AG04450 (cell line): ENCODE measurements at regions of chr15 and their contacts with region 1.

Region 1: DNA sequence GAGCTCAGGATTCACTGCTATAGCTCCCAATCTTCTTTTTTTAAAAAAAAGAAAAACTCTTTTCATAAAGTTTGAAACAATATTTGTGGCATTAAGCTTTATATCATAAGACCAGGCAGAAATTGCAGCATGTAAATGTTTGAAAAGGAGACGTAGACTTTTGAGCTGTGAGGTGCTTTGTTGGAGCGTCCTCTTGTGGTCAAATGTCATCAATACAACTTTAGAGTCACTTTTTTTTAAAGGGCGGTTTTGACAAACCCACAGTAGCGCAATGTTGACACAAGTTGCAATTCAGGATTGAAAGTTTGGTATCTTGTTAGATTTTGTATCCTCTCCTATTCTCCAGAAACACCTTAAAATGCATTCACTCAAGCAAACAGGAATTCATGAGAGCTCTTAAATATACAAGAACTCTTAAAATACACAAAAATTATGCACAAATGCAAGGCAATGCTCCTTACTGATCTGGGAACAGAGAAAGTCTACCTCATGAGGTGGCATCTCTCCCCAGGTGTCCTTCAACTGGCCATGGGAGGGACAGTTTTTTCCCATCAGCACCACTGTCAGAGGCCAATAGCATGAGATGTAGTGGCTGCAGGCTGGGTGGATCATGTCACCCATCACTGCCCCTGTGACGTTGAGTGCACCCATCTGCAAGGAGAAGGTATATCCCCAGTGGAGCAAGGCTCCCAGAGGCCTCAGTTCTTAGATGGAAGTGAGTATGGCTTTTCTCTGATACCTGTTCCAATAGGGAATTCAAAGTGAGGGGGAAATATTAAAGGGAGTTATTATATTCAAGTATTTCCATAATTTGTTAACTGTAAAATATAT is 70.7 kb downstream of the ANXA2 start:
- DNase-seq: peak; percentile 20
- H3K4me3 ChIP-seq: no peak overlapping the region
- H3K27ac ChIP-seq: no peak overlapping the region
- H3K27me3 ChIP-seq: peaks cover 32% of the 10 kb centered on the region
- CTCF ChIP-seq: peak; percentile 88

Region 2: GRCh38 chr15:59699810-59700431 is 627.1 kb before region 1 on chr15:
- CTCF ChIA-PET with region 1: interaction called, 14 read pairs
- POLR2A ChIA-PET with region 1: no interaction called
- DNase-seq: no peak
- H3K4me3 ChIP-seq: no peak overlapping the region
- H3K27ac ChIP-seq: no peak overlapping the region
- H3K27me3 ChIP-seq: no peaks in the 10 kb centered on the region
- CTCF ChIP-seq: no peak

Region 3: DNA sequence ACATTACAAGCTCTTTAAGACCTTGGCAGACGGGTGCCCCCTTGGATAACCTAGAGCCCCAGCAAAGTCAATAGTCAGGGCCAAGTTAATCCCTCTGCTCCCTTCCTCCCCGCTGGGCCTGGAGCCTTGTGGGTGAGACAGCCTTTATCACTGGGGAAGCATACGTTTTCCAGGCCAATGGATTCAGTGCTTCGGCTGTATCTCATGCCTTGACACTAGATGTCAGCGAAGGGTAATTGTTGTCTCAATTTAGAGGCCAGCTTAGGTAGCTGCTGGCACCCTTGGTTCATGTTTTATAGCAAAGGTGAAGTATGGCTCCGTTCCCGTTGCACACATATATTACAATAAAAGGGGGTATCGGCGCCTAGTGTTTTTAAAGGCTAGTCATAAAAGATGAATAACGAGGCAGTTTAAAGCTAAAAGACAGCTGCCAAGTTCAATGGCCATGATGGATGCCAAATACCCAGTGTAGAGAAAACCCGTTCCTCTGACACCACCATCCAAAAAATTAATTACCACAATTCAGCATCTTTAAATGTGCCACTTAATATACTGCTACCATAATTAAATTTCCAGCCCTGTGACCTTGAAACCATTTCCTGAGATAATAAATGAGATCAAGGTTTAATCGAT is 585.6 kb before region 1 on chr15:
- CTCF ChIA-PET with region 1: interaction called, 15 read pairs
- POLR2A ChIA-PET with region 1: no interaction called
- DNase-seq: no peak
- H3K4me3 ChIP-seq: no peak overlapping the region
- H3K27ac ChIP-seq: no peak overlapping the region
- H3K27me3 ChIP-seq: no peaks in the 10 kb centered on the region
- CTCF ChIP-seq: peak; percentile 28

Region 4: GRCh38 chr15:60337076-60337475 is 10.0 kb after region 1 on chr15:
- CTCF ChIA-PET with region 1: interaction called, 40 read pairs
- POLR2A ChIA-PET with region 1: no interaction called
- DNase-seq: no peak
- H3K4me3 ChIP-seq: no peak overlapping the region
- H3K27ac ChIP-seq: no peak overlapping the region
- H3K27me3 ChIP-seq: no peaks in the 10 kb centered on the region
- CTCF ChIP-seq: no peak

Region 5: GRCh38 chr15:60444289-60444912 is 117.4 kb after region 1 on chr15:
- CTCF ChIA-PET with region 1: interaction called, 81 read pairs
- POLR2A ChIA-PET with region 1: no interaction called
- DNase-seq: no peak
- H3K4me3 ChIP-seq: no peak overlapping the region
- H3K27ac ChIP-seq: no peak overlapping the region
- H3K27me3 ChIP-seq: no peaks in the 10 kb centered on the region
- CTCF ChIP-seq: peak; percentile 74

Region 6: DNA sequence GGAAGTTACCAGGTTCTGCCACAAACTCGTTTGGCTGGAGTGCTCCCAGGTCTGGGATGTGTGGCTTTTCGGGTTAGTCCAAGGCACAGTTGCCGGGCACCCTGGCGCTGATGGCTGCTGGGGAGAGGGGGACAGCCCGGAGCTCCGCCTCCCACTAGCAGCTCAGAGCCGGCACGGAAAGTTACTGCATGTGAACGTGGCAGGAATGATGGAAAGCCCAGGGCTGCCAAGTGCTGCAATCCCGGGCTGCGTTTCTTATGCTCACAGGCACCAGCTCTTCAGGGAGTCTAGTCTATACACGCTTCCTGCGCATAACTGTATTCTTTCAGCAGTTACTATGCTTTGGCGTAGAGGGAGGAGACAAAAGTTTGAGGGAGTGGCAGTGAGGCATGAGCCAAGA is 293.7 kb after region 1 on chr15:
- CTCF ChIA-PET with region 1: no interaction called
- POLR2A ChIA-PET with region 1: no interaction called
- DNase-seq: no peak
- H3K4me3 ChIP-seq: no peak overlapping the region
- H3K27ac ChIP-seq: no peak overlapping the region
- H3K27me3 ChIP-seq: peaks cover 17% of the 10 kb centered on the region
- CTCF ChIP-seq: no peak